ENCODE measurements at regions of chr1 and their contacts with region 1.

Region 1: DNA sequence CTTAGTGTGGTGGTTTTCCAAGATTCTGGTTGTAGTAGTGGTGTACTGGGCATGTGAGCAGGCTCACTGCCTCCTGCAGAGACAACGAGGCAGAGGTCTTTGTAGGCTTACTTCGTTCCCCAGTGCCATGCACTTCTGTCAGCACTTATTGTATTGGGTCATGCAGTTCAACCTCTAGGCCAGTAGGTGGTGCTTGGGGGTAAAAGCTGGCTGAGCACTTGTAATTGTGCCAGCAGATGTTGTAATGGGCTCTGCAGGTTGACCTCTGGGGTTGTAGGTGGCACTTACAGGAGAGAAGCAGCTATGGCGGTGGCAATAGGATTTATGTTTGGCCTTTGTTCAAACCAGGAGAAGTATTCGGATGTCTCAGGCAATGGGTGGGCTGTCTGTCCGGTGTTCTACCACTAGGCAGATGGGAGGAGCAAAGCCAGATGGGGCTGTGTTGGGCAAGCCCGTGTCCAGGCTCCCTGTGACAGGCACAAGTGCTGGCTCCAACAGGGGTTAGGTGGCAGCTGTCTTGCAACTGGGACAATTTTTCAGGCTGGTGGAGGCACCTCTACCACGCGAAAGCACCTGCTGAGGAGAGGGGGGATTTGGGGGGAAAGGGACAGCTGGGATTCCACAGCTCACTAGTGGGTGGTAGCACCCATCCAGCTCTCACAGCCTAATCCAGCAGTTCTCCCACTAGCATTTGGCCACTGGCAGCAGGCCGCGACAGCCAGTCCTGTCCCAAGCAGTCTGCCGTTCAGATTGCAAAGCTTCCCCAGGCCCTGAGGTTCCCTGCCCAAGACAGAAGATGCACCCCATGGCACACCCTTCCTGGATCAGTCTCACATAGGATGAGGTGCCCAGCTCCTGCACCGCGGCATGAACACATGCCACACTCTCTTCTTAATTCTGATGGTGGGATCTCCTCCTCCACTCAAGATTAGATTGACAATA is 274.5 kb downstream of the CTH start:
- DNase-seq: peak in 4 of 5 donors; percentile 40 to 63 (median 43)
- ATAC-seq: peak in 3 of 4 donors; percentile 74 to 90 (median 87)
- H3K4me3 ChIP-seq: no peak overlapping the region
- H3K27ac ChIP-seq: no peak overlapping the region
- H3K4me1 ChIP-seq: no peaks in the 10 kb centered on the region
- H3K27me3 ChIP-seq: peaks cover 0 to 6% (median 0%) of the 10 kb centered on the region in 9 donors
- CTCF ChIP-seq: peak; percentile 70 to 85 (median 81)
- POLR2A ChIP-seq: no peak

Region 2: DNA sequence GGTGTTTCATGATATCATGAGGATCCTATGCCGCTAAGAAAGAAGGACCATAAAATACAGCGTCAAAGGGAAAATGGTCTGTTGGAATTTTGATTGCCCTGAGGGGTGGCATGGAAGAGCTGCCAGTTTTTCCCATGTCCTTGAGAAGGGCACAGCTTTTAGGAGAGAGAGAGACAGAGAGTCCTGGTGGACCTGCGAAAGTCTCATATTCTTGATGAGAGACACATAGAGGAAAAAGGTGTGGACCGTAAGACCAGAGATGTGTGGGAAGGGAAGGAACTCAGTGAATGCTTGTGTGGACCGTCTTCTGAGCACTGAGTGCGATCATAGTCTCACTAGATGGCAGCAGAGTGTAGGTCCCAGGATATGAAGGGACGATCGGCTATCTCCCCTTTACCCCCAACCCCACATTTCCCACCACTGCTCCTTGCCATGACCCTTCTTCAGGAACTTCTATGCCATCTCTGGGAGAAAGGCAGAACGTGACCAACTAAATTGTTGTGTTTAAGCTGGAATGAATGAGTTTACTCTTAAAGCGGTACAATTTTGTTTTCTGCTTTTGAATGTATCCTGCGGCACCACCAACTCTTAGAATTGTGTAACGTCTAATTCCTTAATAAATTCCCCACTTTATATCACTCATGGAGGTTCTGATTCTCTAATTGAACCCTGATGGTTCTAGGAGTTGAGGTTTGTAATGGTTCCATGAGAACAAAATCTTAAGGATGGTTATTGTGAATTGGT is 156.8 kb before region 1 on chr1:
- intact Hi-C with region 1: loop called in 2 of 10 experiments (anchors 10 kb)
- DNase-seq: peak in 1 of 5 donors; percentile 9
- ATAC-seq: peak in 3 of 4 donors; percentile 58 to 86 (median 60)
- H3K4me3 ChIP-seq: no peak overlapping the region
- H3K27ac ChIP-seq: no peak overlapping the region
- H3K4me1 ChIP-seq: no peaks in the 10 kb centered on the region
- H3K27me3 ChIP-seq: peaks cover 0 to 8% (median 0%) of the 10 kb centered on the region in 9 donors
- CTCF ChIP-seq: peak; percentile 32 to 73 (median 56)
- POLR2A ChIP-seq: no peak

Region 3: GRCh38 chr1:70536708-70537366 is 148.7 kb before region 1 on chr1:
- intact Hi-C with region 1: loop called in 1 of 10 experiments (anchors 10 kb)
- DNase-seq: no peak
- ATAC-seq: no peak
- H3K4me3 ChIP-seq: no peak overlapping the region
- H3K27ac ChIP-seq: no peak overlapping the region
- H3K4me1 ChIP-seq: no peaks in the 10 kb centered on the region
- H3K27me3 ChIP-seq: peaks cover 0 to 6% (median 0%) of the 10 kb centered on the region in 9 donors
- CTCF ChIP-seq: no peak
- POLR2A ChIP-seq: no peak

Region 4: GRCh38 chr1:70896224-70896623 is 210.7 kb after region 1 on chr1:
- intact Hi-C with region 1: loop called in 5 of 10 experiments (anchors 5 to 10 kb)
- DNase-seq: no peak
- ATAC-seq: no peak
- H3K4me3 ChIP-seq: no peak overlapping the region
- H3K27ac ChIP-seq: no peak overlapping the region
- H3K4me1 ChIP-seq: peaks cover 0 to 18% (median 5%) of the 10 kb centered on the region in 12 donors
- H3K27me3 ChIP-seq: no peaks in the 10 kb centered on the region
- CTCF ChIP-seq: peak in 4 of 12 donors; percentile 8 to 23 (median 18)
- POLR2A ChIP-seq: no peak

Region 5: GRCh38 chr1:71049951-71050598 is 364.5 kb after region 1 on chr1:
- intact Hi-C with region 1: loop called (anchors 1 to 5 kb)
- DNase-seq: no peak
- ATAC-seq: peak in 3 of 4 donors; percentile 56 to 68 (median 61)
- H3K4me3 ChIP-seq: no peak overlapping the region
- H3K27ac ChIP-seq: no peak overlapping the region
- H3K4me1 ChIP-seq: peaks cover 0 to 20% (median 8%) of the 10 kb centered on the region in 12 donors
- H3K27me3 ChIP-seq: peaks cover 6 to 49% (median 26%) of the 10 kb centered on the region in 9 donors
- CTCF ChIP-seq: peak; percentile 62 to 86 (median 72)
- POLR2A ChIP-seq: no peak

Region 6: DNA sequence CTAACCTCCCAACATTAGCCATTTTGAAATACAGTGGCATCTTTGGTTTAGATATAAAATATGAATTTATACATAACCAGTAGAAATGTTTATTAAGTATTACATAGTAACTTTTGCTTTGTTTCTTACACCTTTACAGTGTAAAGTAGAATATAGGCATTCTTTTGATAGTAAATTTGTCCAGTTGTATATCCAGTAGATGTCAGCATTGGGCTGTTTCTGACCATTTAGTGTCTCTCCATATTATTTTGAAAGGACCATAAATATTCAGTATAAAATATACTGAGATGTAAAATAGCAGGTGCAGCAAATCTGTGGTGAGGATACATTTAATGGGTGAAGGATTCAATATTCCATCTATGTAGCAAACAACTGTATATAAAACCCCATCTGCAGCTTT is 511.1 kb after region 1 on chr1:
- intact Hi-C with region 1: no loop called
- DNase-seq: no peak
- ATAC-seq: no peak
- H3K4me3 ChIP-seq: no peak overlapping the region
- H3K27ac ChIP-seq: no peak overlapping the region
- H3K4me1 ChIP-seq: peaks cover 0 to 7% (median 0%) of the 10 kb centered on the region in 12 donors
- H3K27me3 ChIP-seq: no peaks in the 10 kb centered on the region
- CTCF ChIP-seq: peak in 10 of 12 donors; percentile 4 to 54 (median 42)
- POLR2A ChIP-seq: no peak

Measured in heart left ventricle (tissue), 16 donors.